B cell (primary cell): ENCODE measurements at regions of chr6 and their contacts with region 1.

Region 1: GRCh38 chr6:106085984-106086813 is at the start of gene PRDM1:
- DNase-seq: peak; percentile 96
- ATAC-seq: peak; percentile 89
- H3K4me3 ChIP-seq: peak within 1 kb of the TSS; percentile 27 to 76 (median 60)
- H3K4me3 Mint-ChIP-seq: peak within 1 kb of the TSS; percentile 90
- H3K27ac ChIP-seq: peak within 1 kb of the TSS; percentile 1 to 67
- H3K27ac Mint-ChIP-seq: peak within 1 kb of the TSS; percentile 70
- H3K4me1 ChIP-seq: peaks cover 39 to 46% of the 10 kb centered on the region in 2 donors
- H3K4me1 Mint-ChIP-seq: peaks cover 47% of the 10 kb centered on the region
- H3K27me3 ChIP-seq: peaks cover 0 to 8% (median 2%) of the 10 kb centered on the region in 4 experiments
- H3K27me3 Mint-ChIP-seq: peaks cover 6% of the 10 kb centered on the region
- CTCF ChIP-seq: peak; percentile 35
- total RNA-seq, gene PRDM1: 6.9 and 8.5 TPM in 2 replicates

Region 2: DNA sequence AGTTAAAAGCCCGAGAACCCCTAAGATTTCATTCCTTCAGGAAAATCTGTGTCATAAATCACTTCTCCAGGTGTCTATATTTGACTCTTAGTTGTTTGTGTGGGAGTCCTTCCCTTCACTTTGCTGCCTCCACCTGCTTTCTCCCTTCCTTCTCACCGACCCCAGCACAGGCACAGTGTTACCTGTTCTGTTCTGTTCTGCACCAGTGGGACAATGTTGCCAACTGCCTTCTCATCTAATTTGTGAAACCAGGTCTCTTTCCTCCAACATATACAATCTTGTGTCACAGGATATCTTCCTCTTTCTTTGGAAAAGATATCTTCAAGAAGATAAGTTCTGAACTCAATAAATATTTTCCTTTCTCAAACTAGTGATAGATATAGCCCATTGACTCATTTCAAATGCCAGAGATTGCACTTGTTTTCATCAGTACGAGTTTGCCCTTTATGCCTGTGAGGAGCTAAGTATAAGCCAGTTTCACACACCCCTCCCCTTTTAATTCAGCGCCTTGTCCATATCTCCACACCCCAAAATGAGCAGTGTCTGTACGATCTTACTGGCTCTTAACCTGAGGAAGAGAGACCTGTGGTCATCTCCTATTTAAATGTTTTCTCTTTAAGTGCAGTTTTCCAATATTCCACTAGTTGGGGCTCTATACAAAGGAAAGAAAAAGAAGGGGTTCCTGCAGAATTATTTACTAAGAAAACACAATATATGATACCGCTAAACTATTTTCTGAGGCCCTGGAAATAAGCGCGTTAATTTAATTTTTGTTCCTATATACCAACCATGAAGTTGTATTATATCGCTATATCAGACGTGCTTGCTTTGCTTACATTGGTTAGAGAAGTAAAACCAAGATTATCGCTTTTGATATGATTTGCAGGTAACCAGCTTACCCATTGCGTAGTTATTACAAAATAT is 601.7 kb before region 1 on chr6:
- CTCF ChIA-PET with region 1: interaction called, 3 read pairs
- POLR2A ChIA-PET with region 1: no interaction called
- intact Hi-C with region 1: loop called (anchors 10 kb)
- DNase-seq: peak; percentile 43
- ATAC-seq: peak; percentile 28
- H3K4me3 ChIP-seq: no peak overlapping the region
- H3K4me3 Mint-ChIP-seq: no peak overlapping the region
- H3K27ac ChIP-seq: no peak overlapping the region
- H3K27ac Mint-ChIP-seq: no peak overlapping the region
- H3K4me1 ChIP-seq: no peaks in the 10 kb centered on the region
- H3K4me1 Mint-ChIP-seq: peaks cover 5% of the 10 kb centered on the region
- H3K27me3 ChIP-seq: no peaks in the 10 kb centered on the region
- H3K27me3 Mint-ChIP-seq: peaks cover 11% of the 10 kb centered on the region
- CTCF ChIP-seq: peak; percentile 80

Region 3: GRCh38 chr6:105880030-105880492 is 206.1 kb before region 1 on chr6:
- CTCF ChIA-PET with region 1: no interaction called
- POLR2A ChIA-PET with region 1: no interaction called
- intact Hi-C with region 1: loop called (anchors 5 kb)
- DNase-seq: peak; percentile 84
- ATAC-seq: peak; percentile 61
- H3K4me3 ChIP-seq: peak overlapping the region in 4 of 5 experiments; percentile 3 to 37 (median 32)
- H3K4me3 Mint-ChIP-seq: peak overlapping the region; percentile 70
- H3K27ac ChIP-seq: peak overlapping the region in 1 of 2 donors; percentile 32
- H3K27ac Mint-ChIP-seq: no peak overlapping the region
- H3K4me1 ChIP-seq: peaks cover 55 to 62% of the 10 kb centered on the region in 2 donors
- H3K4me1 Mint-ChIP-seq: peaks cover 56% of the 10 kb centered on the region
- H3K27me3 ChIP-seq: no peaks in the 10 kb centered on the region
- H3K27me3 Mint-ChIP-seq: no peaks in the 10 kb centered on the region
- CTCF ChIP-seq: no peak

Region 4: GRCh38 chr6:106097411-106098231 is 11.4 kb after region 1 on chr6:
- CTCF ChIA-PET with region 1: interaction called, 13 read pairs
- POLR2A ChIA-PET with region 1: interaction called, 7 read pairs
- intact Hi-C with region 1: loop called (anchors 1 kb)
- DNase-seq: peak; percentile 82
- ATAC-seq: peak; percentile 74
- H3K4me3 ChIP-seq: peak overlapping the region; percentile 48 to 82 (median 71)
- H3K4me3 Mint-ChIP-seq: peak overlapping the region; percentile 98
- H3K27ac ChIP-seq: peak overlapping the region; percentile 66 to 88
- H3K27ac Mint-ChIP-seq: peak overlapping the region; percentile 96
- H3K4me1 ChIP-seq: peaks cover 20 to 31% of the 10 kb centered on the region in 2 donors
- H3K4me1 Mint-ChIP-seq: peaks cover 75% of the 10 kb centered on the region
- H3K27me3 ChIP-seq: no peaks in the 10 kb centered on the region
- H3K27me3 Mint-ChIP-seq: no peaks in the 10 kb centered on the region
- CTCF ChIP-seq: no peak

Region 5: DNA sequence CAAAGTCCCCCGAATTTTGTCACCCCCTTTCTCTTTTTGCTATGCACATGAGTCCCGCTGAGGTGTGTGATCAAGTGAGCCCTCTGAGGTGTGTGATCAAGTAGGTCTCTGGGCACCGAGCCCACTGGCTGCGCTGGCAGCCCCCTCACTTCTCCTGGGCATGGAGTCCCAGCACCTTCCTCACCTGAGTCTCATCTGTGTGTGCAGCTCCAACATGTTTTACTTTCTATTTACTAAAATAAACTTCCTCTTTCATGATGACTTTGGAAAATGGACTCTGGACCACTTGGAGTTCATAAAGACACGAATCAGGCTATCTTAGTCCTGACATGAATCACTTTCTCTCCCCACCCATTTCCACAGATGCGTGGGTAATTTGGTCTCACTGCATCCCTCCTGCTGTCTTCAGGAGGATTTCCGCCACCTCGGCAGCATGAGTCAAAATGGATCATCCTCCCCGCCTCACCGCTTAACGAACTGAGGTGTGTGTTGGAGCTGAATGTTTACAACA is 39.8 kb after region 1 on chr6:
- CTCF ChIA-PET with region 1: no interaction called
- POLR2A ChIA-PET with region 1: no interaction called
- intact Hi-C with region 1: no loop called
- DNase-seq: peak; percentile 23
- ATAC-seq: peak; percentile 36
- H3K4me3 ChIP-seq: peak overlapping the region in 2 of 5 experiments; percentile 21 to 28
- H3K4me3 Mint-ChIP-seq: peak overlapping the region; percentile 77
- H3K27ac ChIP-seq: no peak overlapping the region
- H3K27ac Mint-ChIP-seq: peak overlapping the region; percentile 69
- H3K4me1 ChIP-seq: peaks cover 6 to 13% of the 10 kb centered on the region in 2 donors
- H3K4me1 Mint-ChIP-seq: peaks cover 25% of the 10 kb centered on the region
- H3K27me3 ChIP-seq: no peaks in the 10 kb centered on the region
- H3K27me3 Mint-ChIP-seq: no peaks in the 10 kb centered on the region
- CTCF ChIP-seq: no peak

Region 6: DNA sequence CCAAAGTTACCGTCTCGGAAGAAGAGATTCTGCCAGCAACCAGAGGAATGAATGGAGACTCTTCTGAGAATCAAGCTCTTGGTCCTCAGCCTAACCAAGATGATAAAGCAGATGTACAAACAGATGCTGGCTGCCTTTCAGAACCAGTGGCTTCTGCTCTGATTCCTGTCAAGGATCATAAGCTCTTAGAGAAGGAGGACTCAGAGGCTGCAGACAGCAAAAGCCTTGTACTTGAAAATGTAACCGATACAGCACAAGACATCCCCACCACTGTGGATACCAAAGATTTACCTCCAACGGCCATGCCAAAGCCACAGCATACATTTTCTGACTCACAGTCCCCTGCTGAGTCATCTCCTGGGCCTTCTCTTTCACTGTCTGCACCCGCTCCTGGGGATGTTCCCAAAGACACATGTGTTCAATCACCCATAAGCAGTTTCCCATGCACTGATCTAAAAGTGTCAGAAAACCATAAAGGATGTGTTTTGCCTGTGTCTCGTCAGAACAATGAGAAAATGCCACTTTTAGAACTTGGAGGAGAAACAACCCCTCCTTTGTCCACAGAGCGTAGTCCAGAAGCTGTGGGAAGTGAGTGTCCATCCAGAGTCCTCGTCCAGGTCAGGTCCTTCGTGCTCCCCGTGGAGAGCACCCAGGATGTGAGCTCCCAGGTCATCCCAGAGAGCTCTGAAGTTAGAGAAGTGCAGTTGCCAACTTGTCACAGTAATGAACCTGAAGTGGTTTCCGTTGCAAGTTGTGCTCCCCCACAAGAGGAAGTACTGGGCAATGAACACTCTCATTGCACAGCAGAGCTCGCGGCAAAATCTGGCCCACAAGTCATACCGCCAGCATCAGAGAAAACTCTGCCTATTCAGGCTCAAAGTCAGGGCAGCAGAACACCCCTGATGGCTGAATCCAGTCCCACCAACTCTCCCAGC is 433.5 kb after region 1 on chr6:
- CTCF ChIA-PET with region 1: no interaction called
- POLR2A ChIA-PET with region 1: no interaction called
- intact Hi-C with region 1: loop called (anchors 10 kb)
- DNase-seq: peak; percentile 81
- ATAC-seq: peak; percentile 65
- H3K4me3 ChIP-seq: peak overlapping the region; percentile 9 to 83 (median 54)
- H3K4me3 Mint-ChIP-seq: peak overlapping the region; percentile 88
- H3K27ac ChIP-seq: peak overlapping the region; percentile 81
- H3K27ac Mint-ChIP-seq: peak overlapping the region; percentile 93
- H3K4me1 ChIP-seq: peaks cover 81 to 83% of the 10 kb centered on the region in 2 donors
- H3K4me1 Mint-ChIP-seq: peaks cover 81% of the 10 kb centered on the region
- H3K27me3 ChIP-seq: no peaks in the 10 kb centered on the region
- H3K27me3 Mint-ChIP-seq: no peaks in the 10 kb centered on the region
- CTCF ChIP-seq: no peak

Region 7: DNA sequence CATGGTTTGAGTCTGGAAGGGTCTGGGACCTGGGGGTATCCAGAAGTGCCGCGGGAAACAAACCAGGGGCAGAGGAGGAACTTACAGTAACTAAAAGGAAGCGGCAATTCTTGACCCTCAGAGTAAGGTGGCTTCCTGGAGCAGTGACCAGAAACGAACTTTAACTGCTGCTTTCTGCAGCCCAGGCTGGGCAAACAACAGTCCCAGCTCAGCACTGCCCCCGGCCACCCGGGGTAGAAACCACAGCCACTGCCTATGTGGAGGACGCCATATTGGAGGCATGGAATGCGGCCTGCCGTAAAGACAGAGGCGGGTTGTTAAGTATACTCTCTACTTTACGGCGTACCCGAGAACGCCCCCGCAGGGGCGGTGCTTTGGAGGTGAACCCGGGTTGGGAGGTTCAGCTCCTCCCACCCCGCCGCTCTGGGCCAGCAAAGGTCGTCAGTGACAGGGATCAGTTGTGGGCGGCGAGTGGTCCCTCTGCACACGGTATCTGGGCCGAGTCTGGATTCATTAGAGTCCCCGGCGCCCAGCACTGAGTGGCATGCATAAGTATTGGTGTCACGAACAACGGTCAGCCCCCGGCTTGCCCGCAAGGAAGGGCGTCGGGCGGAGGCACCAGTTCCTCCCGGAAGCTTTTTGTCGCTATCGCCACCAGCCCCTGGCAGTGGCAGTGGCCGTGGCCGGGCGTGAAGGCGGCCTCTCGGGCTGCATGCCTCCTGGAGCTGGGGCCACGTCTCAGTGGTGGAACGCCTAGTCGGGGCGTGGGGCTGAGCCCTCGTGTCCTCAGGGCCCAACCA is 1373.3 kb after region 1 on chr6 and contains the start of gene PDSS2:
- CTCF ChIA-PET with region 1: no interaction called
- POLR2A ChIA-PET with region 1: no interaction called
- intact Hi-C with region 1: loop called (anchors 5 kb)
- DNase-seq: peak; percentile 96
- ATAC-seq: peak; percentile 96
- H3K4me3 ChIP-seq: peak within 1 kb of the TSS; percentile 70 to 96 (median 93)
- H3K4me3 Mint-ChIP-seq: peak within 1 kb of the TSS; percentile 88
- H3K27ac ChIP-seq: peak within 1 kb of the TSS; percentile 88 to 91
- H3K27ac Mint-ChIP-seq: peak within 1 kb of the TSS; percentile 99
- H3K4me1 ChIP-seq: peaks cover 10 to 13% of the 10 kb centered on the region in 2 donors
- H3K4me1 Mint-ChIP-seq: peaks cover 25% of the 10 kb centered on the region
- H3K27me3 ChIP-seq: no peaks in the 10 kb centered on the region
- H3K27me3 Mint-ChIP-seq: no peaks in the 10 kb centered on the region
- CTCF ChIP-seq: peak; percentile 52
- total RNA-seq, gene PDSS2: 16.9 and 18.3 TPM in 2 replicates